Mammary epithelial cell (primary cell): ENCODE measurements at regions of chr1 and their contacts with region 1.

Region 1: DNA sequence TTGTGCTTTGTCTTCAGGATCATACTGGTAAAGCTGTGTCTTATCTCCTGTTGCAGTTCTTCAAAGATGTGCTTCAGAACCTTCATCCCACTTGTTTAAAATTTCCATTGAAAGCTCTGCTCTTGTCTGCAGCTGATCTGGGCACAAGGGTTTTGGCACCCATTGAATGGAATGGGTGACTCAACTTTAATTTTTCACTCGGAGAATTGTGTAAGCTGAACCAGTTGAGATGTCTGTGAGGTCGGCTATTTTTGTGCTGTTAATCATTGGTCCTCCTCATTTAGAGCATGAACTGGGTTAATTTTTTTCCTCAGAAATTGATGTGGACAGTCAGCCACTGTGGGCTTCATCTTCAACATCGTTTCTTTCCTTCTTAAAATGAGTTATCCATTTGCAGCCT is 252.1 kb downstream of the TM2D1 start:
- DNase-seq: peak; percentile 62
- H3K4me3 ChIP-seq: no peak overlapping the region
- H3K27ac ChIP-seq: no peak overlapping the region
- H3K4me1 ChIP-seq: no peaks in the 10 kb centered on the region
- H3K27me3 ChIP-seq: no peaks in the 10 kb centered on the region
- CTCF ChIP-seq: no peak

Region 2: GRCh38 chr1:61569303-61569621 is 96.4 kb after region 1 on chr1:
- CTCF ChIA-PET with region 1: no interaction called
- dilution Hi-C with region 1: loop called (anchors 5 kb)
- in situ Hi-C with region 1: no loop called
- intact Hi-C with region 1: no loop called
- DNase-seq: no peak
- H3K4me3 ChIP-seq: no peak overlapping the region
- H3K27ac ChIP-seq: no peak overlapping the region
- H3K4me1 ChIP-seq: no peaks in the 10 kb centered on the region
- H3K27me3 ChIP-seq: no peaks in the 10 kb centered on the region
- CTCF ChIP-seq: no peak